KBM-7 (cell line): ENCODE measurements at regions of chr10 and their contacts with region 1.

Region 1: GRCh38 chr10:21278491-21279239 is 246.8 kb downstream of the SKIDA1 start:
- DNase-seq: peak; percentile 86

Region 2: DNA sequence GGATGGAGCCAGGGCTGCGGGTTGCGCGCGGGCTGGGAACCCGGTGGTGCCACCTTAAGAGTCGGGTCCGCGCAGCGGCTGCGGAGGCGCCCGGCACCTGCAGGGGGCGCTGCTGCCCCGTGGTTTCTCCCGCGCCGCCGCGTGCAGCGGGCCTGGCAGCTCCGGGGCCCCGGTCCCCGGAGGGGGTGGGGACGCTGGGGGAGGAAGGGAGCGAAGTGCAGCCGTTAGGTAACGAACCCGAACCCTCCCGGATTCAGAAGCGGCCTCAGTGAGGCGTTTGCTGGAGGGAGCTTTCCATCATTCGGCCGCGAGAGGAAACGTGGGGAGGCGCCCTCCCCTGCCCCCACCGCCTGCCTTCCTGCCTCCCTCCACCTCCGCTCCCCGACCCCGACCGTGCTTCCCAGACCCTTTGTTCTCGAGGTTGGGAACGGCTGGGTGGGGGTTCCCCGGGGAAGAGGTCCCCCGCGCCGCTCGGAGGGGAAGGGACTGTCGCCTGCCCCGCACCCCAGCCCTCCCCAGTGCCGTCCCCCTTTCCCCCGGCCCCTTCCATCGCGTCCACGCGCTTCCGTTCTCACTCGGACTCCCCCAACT is 217.2 kb after region 1 on chr10:
- in situ Hi-C with region 1: loop called (anchors 25 kb)
- DNase-seq: peak; percentile 93